SK-N-SH (cell line): ENCODE measurements at regions of chr5 and their contacts with region 1.

Region 1: GRCh38 chr5:1644810-1645571 is 121.2 kb upstream of the LPCAT1 start:
- DNase-seq: peak; percentile 91
- H3K4me3 ChIP-seq: peak overlapping the region; percentile 22 to 54; a peak in 3 of 4 replicates
- H3K27ac ChIP-seq: no peak overlapping the region
- H3K4me1 ChIP-seq: peaks cover 0 to 4% of the 10 kb centered on the region in 2 experiments; a peak in 1 of 4 replicates
- H3K27me3 ChIP-seq: peaks cover 25% of the 10 kb centered on the region
- CTCF ChIP-seq: peak; percentile 73
- EP300 ChIP-seq: no peak
- RAD21 ChIP-seq: peak; percentile 84

Region 2: GRCh38 chr5:1174122-1174936 is 470.7 kb before region 1 on chr5:
- CTCF ChIA-PET with region 1: interaction called, 38 read pairs
- POLR2A ChIA-PET with region 1: no interaction called
- DNase-seq: peak; percentile 82
- H3K4me3 ChIP-seq: no peak overlapping the region; a peak in 1 of 4 replicates
- H3K27ac ChIP-seq: no peak overlapping the region
- H3K4me1 ChIP-seq: no peaks in the 10 kb centered on the region; a peak in 1 of 4 replicates
- H3K27me3 ChIP-seq: no peaks in the 10 kb centered on the region
- CTCF ChIP-seq: peak; percentile 82
- EP300 ChIP-seq: no peak
- RAD21 ChIP-seq: peak; percentile 71

Region 3: GRCh38 chr5:1380011-1380817 is 264.8 kb before region 1 on chr5:
- CTCF ChIA-PET with region 1: interaction called, 12 read pairs
- POLR2A ChIA-PET with region 1: interaction called, 3 read pairs
- DNase-seq: peak; percentile 67
- H3K4me3 ChIP-seq: peak overlapping the region in 1 of 2 experiments; percentile 39; a peak in 3 of 4 replicates
- H3K27ac ChIP-seq: no peak overlapping the region
- H3K4me1 ChIP-seq: no peaks in the 10 kb centered on the region; a peak in 1 of 4 replicates
- H3K27me3 ChIP-seq: peaks cover 26% of the 10 kb centered on the region; the same call in 1 of the 2 replicates
- CTCF ChIP-seq: peak; percentile 67
- EP300 ChIP-seq: no peak
- RAD21 ChIP-seq: peak; percentile 29; the same call in 1 of the 2 replicates

Region 4: DNA sequence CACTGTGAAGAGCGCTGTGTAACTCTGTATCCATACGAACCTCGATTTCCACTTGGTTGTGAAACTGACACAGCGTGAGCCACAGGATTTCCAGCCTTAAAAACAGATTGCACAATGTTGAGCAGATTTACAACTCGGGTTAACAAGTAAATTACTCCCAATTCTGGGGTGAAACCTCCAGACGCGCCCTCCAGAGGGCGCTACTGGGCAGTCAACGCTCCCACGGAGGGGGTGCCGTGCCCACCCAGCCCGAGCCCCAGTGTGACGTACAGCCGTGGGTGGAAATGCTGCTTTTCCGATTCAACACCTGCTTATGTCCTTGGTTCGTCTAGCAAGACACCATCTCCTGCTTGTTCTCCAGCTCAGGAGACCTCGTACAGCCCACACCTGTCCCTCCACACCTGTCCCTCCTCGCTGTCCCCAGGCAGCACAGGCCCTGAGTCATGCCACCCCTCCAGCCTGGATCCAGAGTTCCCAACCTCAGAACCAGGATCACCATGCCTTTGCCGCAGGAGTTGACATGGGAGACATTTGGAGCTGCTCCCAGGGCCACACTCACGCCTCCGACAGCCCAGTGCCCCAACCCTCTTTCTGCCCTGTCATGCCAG is 165.3 kb before region 1 on chr5:
- CTCF ChIA-PET with region 1: interaction called, 32 read pairs
- POLR2A ChIA-PET with region 1: no interaction called
- DNase-seq: peak; percentile 87
- H3K4me3 ChIP-seq: no peak overlapping the region; a peak in 1 of 4 replicates
- H3K27ac ChIP-seq: no peak overlapping the region
- H3K4me1 ChIP-seq: no peaks in the 10 kb centered on the region
- H3K27me3 ChIP-seq: no peaks in the 10 kb centered on the region
- CTCF ChIP-seq: peak; percentile 71
- EP300 ChIP-seq: no peak
- RAD21 ChIP-seq: peak; percentile 39

Region 5: DNA sequence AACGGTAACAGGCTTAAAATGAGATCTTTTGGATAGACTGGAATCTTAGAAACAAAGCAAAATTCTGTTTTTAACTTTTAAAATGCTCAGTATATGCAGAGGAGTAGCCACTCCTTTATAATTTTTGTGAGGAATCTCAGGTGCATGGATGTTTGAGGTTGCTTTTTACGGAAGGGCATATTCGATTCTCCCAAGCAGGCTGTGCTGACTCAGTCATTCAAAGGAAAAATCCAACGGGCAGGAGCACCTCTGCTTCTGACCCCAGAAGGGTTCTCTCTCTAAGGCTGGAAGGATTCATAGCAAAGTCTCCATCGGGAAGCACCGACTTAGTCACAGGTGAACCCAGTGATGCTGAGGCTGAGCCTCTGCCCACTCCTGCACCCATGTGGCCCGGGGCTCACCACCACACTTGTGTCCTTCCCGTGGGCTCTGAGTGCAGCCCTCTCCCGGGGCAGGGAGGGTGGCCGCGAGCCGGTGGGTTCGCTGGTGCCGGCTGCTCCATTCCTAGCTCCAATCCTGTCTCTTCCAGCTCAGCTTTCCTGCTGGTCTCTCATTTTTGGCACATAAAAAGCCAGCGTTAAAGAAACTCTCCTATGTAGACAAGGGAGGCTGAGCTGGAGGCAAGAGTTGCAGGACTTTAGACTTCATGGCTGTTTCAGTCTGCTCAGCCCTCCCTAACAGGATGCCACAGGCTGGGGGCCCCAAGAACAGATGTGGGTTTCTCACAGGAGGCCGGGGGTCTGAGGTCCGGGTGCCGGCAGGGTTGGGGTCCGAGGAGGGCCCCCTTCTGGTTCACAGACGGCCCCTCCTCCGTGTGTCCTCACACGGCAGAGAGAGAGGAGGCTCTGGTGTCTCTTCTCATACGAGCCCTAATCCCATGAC is 14.3 kb after region 1 on chr5:
- CTCF ChIA-PET with region 1: interaction called, 29 read pairs
- POLR2A ChIA-PET with region 1: no interaction called
- DNase-seq: peak; percentile 33
- H3K4me3 ChIP-seq: no peak overlapping the region
- H3K27ac ChIP-seq: no peak overlapping the region
- H3K4me1 ChIP-seq: no peaks in the 10 kb centered on the region; a peak in 1 of 4 replicates
- H3K27me3 ChIP-seq: peaks cover 83% of the 10 kb centered on the region
- CTCF ChIP-seq: no peak
- EP300 ChIP-seq: no peak
- RAD21 ChIP-seq: no peak

Region 6: DNA sequence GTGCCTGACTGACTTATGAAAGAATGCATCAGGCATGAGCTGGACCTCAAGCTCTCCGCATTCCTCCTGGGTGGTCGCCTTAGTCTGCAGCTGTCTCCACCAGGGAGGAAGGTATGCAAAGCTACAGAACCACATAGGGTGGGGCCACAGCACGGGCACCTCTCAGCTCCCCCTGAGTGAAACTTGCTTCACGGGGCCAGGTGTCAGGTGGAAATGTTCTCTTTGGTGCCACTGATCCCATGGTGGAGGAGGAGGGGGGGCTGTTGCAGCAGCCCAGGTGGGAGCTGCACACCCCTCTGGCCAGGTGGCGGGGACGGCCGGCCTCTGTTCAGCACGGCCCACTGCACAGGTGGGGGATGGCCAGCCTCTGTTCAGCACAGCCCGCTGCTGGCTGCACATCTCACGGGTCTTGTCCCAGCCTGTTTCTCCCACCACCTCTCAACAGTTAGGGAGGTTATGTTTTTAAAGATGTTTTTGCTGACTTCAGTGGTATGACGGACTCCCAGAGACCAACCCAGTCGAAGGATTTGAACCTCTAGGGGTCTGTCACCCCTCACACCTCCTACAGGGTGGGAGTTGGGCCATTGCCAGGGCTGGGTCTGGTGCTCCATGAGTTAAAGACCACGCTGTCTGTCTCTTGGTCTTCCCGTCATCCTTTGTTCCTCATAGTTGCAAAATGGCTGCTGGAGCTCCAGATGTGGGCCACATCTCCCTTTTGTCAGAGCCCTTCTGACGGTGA is 120.3 kb after region 1 on chr5:
- CTCF ChIA-PET with region 1: no interaction called
- POLR2A ChIA-PET with region 1: no interaction called
- DNase-seq: no peak
- H3K4me3 ChIP-seq: no peak overlapping the region
- H3K27ac ChIP-seq: no peak overlapping the region
- H3K4me1 ChIP-seq: no peaks in the 10 kb centered on the region
- H3K27me3 ChIP-seq: peaks cover 81% of the 10 kb centered on the region
- CTCF ChIP-seq: no peak
- EP300 ChIP-seq: no peak
- RAD21 ChIP-seq: no peak

Region 7: GRCh38 chr5:1917832-1918487 is 273.0 kb after region 1 on chr5:
- CTCF ChIA-PET with region 1: no interaction called
- POLR2A ChIA-PET with region 1: no interaction called
- DNase-seq: no peak
- H3K4me3 ChIP-seq: no peak overlapping the region
- H3K27ac ChIP-seq: no peak overlapping the region
- H3K4me1 ChIP-seq: no peaks in the 10 kb centered on the region
- H3K27me3 ChIP-seq: peaks cover 67% of the 10 kb centered on the region
- CTCF ChIP-seq: no peak
- EP300 ChIP-seq: no peak
- RAD21 ChIP-seq: no peak